Caco-2 (cell line): ENCODE measurements at regions of chr4 and their contacts with region 1.

Region 1: DNA sequence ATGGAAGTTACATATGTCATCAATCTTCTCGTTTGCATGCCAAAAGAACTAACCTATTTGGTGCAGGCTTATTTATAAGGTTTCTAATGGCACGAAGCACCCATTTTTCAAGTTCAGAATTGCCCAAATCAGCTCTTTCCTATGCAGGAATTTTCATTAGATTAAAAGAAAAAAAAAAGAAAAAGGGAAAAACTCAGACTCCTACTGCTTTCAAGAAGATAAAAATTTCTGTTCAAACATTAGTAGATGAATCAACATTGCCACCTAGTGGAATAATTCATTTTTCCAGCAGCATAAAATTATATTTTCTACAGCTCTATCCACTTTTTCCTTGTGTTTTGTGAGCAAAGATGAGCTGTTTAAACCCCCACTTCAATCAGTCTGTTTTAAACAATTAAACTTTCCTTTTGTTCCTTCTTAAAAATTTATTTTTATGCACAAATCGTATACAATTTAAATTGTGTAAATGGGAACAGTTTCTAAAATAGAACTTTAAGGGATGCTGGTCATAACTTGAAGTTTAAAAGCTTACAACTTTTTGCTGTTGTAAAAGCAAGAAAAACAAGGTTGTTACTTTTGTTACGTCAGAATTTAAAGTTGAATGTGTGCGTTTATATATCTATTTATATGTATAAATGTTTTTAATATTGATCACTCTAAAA is 309.9 kb downstream of the ARAP2 start:
- DNase-seq: peak in 1 of 2 experiments; percentile 19
- H3K4me3 ChIP-seq: no peak overlapping the region
- H3K4me3 Mint-ChIP-seq: no peak overlapping the region
- H3K27ac Mint-ChIP-seq: no peak overlapping the region
- H3K4me1 ChIP-seq: no peaks in the 10 kb centered on the region
- H3K4me1 Mint-ChIP-seq: no peaks in the 10 kb centered on the region
- H3K27me3 ChIP-seq: no peaks in the 10 kb centered on the region
- H3K27me3 Mint-ChIP-seq: peaks cover 15% of the 10 kb centered on the region
- CTCF ChIP-seq: peak; percentile 41 to 56

Region 2: DNA sequence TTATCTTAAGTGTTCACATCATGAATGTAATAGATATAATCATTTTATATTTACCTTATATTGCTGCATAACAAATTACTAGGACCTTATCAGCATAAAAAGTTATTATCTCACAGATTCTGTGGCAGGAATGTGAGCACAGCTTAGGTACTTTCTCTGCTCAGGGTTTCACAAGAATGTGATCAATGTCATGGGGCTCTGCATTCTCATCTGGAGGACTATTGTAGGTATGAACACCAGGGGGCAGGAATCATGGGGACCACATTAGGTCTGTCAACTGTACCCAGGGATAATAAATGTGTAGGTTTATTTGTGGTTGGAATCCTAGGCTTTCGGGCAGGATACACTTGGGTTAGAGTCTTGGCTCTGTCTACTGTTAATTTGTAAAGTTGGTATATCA is 209.3 kb before region 1 on chr4:
- CTCF ChIA-PET with region 1: no interaction called
- POLR2A ChIA-PET with region 1: no interaction called
- intact Hi-C with region 1: loop called (anchors 1 kb)
- DNase-seq: peak in 1 of 2 experiments; percentile 9
- H3K4me3 ChIP-seq: no peak overlapping the region
- H3K4me3 Mint-ChIP-seq: no peak overlapping the region
- H3K27ac Mint-ChIP-seq: no peak overlapping the region
- H3K4me1 ChIP-seq: no peaks in the 10 kb centered on the region
- H3K4me1 Mint-ChIP-seq: no peaks in the 10 kb centered on the region
- H3K27me3 ChIP-seq: no peaks in the 10 kb centered on the region
- H3K27me3 Mint-ChIP-seq: no peaks in the 10 kb centered on the region
- CTCF ChIP-seq: no peak